ENCODE measurements at regions of chr1 and their contacts with region 1.

Region 1: DNA sequence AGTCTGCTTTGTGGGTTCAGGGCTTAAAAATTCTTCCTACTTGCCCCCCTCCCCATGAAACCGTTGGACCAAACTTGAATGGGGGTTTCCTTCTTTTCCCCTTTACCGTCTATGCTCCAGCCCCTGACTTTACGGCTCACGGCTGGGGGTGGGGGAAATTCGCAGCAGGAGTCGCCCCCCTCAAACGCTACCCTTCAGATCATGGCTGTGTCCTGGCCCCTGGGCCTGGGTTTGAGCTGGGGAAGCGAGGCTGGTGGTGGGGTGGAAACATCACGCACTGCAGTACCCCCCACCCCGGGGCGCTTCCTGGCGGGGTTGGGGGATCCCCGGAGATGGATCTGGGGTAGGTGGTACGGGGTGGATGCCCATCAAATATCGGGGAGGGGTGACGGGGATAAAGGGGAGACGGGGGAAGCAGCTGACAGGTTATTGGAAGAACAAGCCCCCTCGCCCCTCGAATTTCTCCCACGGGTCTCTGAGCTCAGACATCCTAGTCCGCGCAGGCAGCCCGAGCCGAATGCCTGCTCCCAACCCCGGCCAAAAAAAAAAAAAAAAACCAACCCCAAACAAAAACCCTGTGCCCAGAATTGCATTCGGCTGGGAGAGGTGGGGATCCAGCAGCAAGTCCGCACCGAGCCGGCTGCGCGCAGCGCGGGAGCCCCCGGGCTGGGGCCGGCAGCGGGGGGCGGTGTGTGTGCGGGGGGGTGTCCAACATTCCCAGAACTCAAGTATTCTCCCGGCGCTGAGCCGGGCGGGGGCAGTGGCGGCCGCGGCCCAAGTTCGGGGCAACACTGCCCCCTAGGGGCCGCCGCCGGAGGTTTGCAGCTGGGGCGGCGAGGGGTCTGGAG is 59.0 kb upstream of the ACOT11 start:
- DNase-seq: peak; percentile 83
- ATAC-seq: peak; percentile 68
- H3K4me3 ChIP-seq: peak overlapping the region; percentile 64 to 82 (median 74)
- H3K4me3 Mint-ChIP-seq: peak overlapping the region; percentile 85
- H3K27ac ChIP-seq: peak overlapping the region; percentile 18 to 76
- H3K27ac Mint-ChIP-seq: peak overlapping the region; percentile 78
- H3K4me1 ChIP-seq: peaks cover 17 to 37% of the 10 kb centered on the region in 2 donors
- H3K4me1 Mint-ChIP-seq: peaks cover 24% of the 10 kb centered on the region
- H3K27me3 ChIP-seq: peaks cover 0 to 11% (median 4%) of the 10 kb centered on the region in 4 experiments
- H3K27me3 Mint-ChIP-seq: peaks cover 12% of the 10 kb centered on the region
- CTCF ChIP-seq: peak; percentile 99

Region 2: DNA sequence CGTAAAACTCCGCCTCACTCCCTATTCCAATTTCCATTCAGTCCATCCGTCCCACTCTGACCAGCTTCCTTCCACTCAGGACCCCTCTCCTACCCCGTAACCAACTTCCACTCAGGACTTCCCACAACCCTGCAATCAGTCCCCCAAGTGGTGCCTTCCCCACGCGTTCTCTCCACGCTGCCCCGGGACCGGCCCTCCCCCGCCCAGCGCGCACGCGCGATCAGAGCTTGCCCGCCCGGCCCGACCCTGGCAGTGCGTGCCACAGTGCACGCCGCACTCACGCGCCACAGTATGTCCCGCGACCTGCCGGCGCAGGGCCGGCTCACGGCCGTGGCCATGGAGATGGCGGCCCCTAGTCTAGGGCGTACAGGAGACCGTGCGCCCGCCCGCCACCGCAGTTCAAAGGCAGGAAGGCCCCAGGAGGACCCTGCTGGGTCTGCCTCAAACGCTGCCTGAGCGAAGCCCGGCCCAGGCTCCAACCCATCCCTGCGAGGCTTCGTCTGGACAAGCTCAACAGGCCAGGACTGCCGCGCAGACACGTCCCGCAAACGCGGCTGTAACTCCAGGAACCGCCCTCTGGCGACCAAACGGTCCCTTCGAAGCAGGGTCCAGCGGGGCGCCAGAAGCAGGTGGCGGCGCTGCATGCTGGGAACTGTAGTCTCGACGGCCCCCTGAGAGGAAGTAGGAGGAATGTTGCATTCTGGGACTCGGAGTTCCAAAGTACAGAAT is 650.9 kb before region 1 on chr1 and contains the start of gene NDC1:
- CTCF ChIA-PET with region 1: no interaction called
- POLR2A ChIA-PET with region 1: no interaction called
- intact Hi-C with region 1: loop called (anchors 2 kb)
- DNase-seq: peak; percentile 96
- ATAC-seq: peak; percentile 90
- H3K4me3 ChIP-seq: peak within 1 kb of the TSS; percentile 66 to 95 (median 90)
- H3K4me3 Mint-ChIP-seq: peak within 1 kb of the TSS; percentile 100
- H3K27ac ChIP-seq: peak within 1 kb of the TSS; percentile 91 to 95
- H3K27ac Mint-ChIP-seq: peak within 1 kb of the TSS; percentile 99
- H3K4me1 ChIP-seq: peaks cover 11 to 14% of the 10 kb centered on the region in 2 donors
- H3K4me1 Mint-ChIP-seq: peaks cover 35% of the 10 kb centered on the region
- H3K27me3 ChIP-seq: no peaks in the 10 kb centered on the region
- H3K27me3 Mint-ChIP-seq: no peaks in the 10 kb centered on the region
- CTCF ChIP-seq: no peak
- total RNA-seq, gene NDC1: 12.0 and 15.7 TPM in 2 replicates

Region 3: DNA sequence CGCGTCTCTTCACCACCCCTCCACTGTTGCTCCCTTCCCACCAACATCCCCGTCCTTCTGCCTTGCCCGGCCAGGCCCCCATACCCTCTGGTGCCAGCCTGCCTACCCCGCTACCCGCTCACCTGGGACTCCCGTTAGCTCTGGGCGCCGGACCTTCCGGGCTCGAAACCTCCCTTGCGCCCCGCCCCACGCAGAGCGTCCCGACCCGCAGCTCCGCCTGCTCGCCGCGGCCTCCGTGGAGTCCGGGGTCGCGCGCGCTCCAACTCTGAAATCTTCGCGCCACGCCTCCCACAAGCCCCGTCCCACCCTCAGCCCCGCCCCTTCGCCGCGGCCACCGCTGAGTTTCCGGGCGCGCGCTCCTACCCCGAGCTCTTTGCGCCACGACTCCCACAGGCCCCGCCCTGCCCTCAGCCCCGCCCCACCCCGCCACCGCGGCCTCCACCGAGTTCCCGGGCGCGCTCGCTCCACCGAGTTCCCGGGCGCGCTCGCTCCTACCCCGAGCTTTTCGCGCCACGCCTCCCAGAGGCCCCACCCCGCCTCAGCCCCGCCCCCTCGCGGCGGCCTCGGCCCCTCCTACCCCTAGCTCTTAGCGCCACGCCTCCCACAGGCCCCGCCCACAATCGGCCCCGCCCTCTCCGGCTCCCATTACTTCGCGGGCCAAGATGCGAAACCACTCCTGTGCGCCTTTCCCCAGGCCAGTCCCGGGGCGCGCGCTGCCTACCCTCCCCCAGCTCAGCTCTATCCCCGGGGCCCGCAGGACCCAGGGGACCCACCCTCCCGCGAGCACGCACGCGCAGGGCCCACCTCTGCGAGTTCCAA is 543.4 kb before region 1 on chr1 and contains the start of gene IFT25:
- CTCF ChIA-PET with region 1: interaction called, 4 read pairs
- POLR2A ChIA-PET with region 1: no interaction called
- intact Hi-C with region 1: loop called (anchors 2 kb)
- DNase-seq: peak; percentile 98
- ATAC-seq: peak; percentile 79
- H3K4me3 ChIP-seq: peak within 1 kb of the TSS; percentile 65 to 95 (median 87)
- H3K4me3 Mint-ChIP-seq: peak within 1 kb of the TSS; percentile 99
- H3K27ac ChIP-seq: peak within 1 kb of the TSS; percentile 65 to 81
- H3K27ac Mint-ChIP-seq: peak within 1 kb of the TSS; percentile 96
- H3K4me1 ChIP-seq: peaks cover 16 to 20% of the 10 kb centered on the region in 2 donors
- H3K4me1 Mint-ChIP-seq: peaks cover 33% of the 10 kb centered on the region
- H3K27me3 ChIP-seq: no peaks in the 10 kb centered on the region
- H3K27me3 Mint-ChIP-seq: no peaks in the 10 kb centered on the region
- CTCF ChIP-seq: no peak
- total RNA-seq, gene IFT25: 45.7 and 48.1 TPM in 2 replicates

Region 4: DNA sequence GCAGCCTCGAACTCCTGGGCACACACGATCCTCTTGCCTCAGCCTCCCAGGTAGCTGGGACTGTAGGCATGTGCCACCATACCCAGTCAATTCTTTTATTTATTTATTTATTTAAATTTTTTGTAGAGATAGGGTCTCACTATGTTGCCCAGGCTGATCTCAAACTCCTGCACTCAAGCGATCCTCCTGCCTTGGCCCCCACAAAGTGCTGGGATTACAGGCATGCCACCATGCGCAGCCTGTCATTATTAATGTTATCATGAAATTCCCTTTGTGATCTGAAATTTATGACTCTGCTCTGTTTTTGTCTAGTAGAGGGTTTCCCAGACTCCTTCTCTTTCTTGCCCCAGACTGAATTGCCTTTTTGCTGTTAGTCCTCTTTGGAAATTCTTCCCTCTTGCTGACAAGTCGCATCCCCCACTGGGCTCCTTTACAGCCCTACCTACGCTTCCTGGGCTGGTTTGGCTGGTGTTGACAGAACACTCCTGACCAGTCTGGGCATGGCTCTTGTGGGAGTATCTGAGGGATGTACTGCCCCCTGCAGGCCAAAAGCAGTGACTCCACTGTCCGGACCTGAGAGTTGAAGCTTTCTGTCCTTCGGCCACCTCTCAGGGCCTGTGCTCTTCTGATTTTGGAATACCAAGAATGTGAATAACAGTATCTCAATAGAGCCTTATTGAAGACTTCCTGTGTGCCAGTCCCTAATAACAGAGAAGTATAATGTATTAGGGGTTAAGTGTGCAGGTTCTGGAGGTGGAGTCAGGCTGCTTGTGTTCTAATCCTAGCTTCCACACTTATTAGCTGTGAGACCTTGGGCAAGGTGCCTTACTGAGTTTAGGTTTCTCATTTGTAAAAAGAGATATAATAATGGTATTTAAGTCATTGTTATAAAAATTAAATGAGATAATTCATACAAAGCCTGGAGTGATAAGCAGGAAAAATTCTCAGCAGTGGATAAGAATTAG is 407.4 kb before region 1 on chr1:
- CTCF ChIA-PET with region 1: interaction called, 23 read pairs
- POLR2A ChIA-PET with region 1: no interaction called
- intact Hi-C with region 1: no loop called
- DNase-seq: peak; percentile 61
- ATAC-seq: peak; percentile 69
- H3K4me3 ChIP-seq: no peak overlapping the region
- H3K4me3 Mint-ChIP-seq: no peak overlapping the region
- H3K27ac ChIP-seq: no peak overlapping the region
- H3K27ac Mint-ChIP-seq: no peak overlapping the region
- H3K4me1 ChIP-seq: no peaks in the 10 kb centered on the region
- H3K4me1 Mint-ChIP-seq: peaks cover 4% of the 10 kb centered on the region
- H3K27me3 ChIP-seq: no peaks in the 10 kb centered on the region
- H3K27me3 Mint-ChIP-seq: no peaks in the 10 kb centered on the region
- CTCF ChIP-seq: peak; percentile 74

Region 5: DNA sequence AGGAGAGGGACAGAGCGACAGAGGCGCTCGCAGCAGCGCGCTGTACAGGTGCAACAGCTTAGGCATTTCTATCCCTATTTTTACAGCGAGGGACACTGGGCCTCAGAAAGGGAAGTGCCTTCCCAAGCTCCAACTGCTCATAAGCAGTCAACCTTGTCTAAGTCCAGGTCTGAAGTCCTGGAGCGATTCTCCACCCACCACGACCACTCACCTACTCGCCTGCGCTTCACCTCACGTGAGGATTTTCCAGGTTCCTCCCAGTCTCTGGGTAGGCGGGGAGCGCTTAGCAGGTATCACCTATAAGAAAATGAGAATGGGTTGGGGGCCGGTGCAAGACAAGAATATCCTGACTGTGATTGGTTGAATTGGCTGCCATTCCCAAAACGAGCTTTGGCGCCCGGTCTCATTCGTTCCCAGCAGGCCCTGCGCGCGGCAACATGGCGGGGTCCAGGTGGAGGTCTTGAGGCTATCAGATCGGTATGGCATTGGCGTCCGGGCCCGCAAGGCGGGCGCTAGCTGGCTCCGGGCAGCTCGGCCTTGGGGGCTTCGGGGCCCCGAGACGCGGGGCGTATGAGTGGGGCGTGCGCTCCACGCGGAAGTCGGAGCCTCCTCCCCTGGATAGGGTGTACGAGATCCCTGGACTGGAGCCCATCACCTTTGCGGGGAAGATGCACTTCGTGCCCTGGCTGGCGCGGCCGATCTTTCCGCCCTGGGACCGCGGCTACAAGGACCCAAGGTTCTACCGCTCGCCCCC is 289.1 kb before region 1 on chr1 and contains the starts of genes CYB5RL and MRPL37:
- CTCF ChIA-PET with region 1: interaction called, 10 read pairs
- POLR2A ChIA-PET with region 1: no interaction called
- intact Hi-C with region 1: loop called (anchors 1 kb)
- DNase-seq: peak; percentile 94
- ATAC-seq: peak; percentile 99
- H3K4me3 ChIP-seq: peak within 1 kb of the TSS; percentile 75 to 98 (median 88)
- H3K4me3 Mint-ChIP-seq: peak within 1 kb of the TSS; percentile 97
- H3K27ac ChIP-seq: peak within 1 kb of the TSS; percentile 60 to 77
- H3K27ac Mint-ChIP-seq: peak within 1 kb of the TSS; percentile 88
- H3K4me1 ChIP-seq: peaks cover 18 to 21% of the 10 kb centered on the region in 2 donors
- H3K4me1 Mint-ChIP-seq: peaks cover 34% of the 10 kb centered on the region
- H3K27me3 ChIP-seq: no peaks in the 10 kb centered on the region
- H3K27me3 Mint-ChIP-seq: no peaks in the 10 kb centered on the region
- CTCF ChIP-seq: no peak
- total RNA-seq, gene CYB5RL: 12.4 and 13.2 TPM in 2 replicates
- total RNA-seq, gene MRPL37: 37.0 and 39.9 TPM in 2 replicates

Region 6: GRCh38 chr1:54406339-54407153 is 82.5 kb before region 1 on chr1 and contains the start of gene SSBP3:
- CTCF ChIA-PET with region 1: interaction called, 81 read pairs
- POLR2A ChIA-PET with region 1: interaction called, 65 read pairs
- intact Hi-C with region 1: no loop called
- DNase-seq: peak; percentile 93
- ATAC-seq: peak; percentile 89
- H3K4me3 ChIP-seq: peak within 1 kb of the TSS; percentile 60 to 94 (median 85)
- H3K4me3 Mint-ChIP-seq: peak within 1 kb of the TSS; percentile 94
- H3K27ac ChIP-seq: peak within 1 kb of the TSS; percentile 53 to 70
- H3K27ac Mint-ChIP-seq: peak within 1 kb of the TSS; percentile 87
- H3K4me1 ChIP-seq: peaks cover 40 to 47% of the 10 kb centered on the region in 2 donors
- H3K4me1 Mint-ChIP-seq: peaks cover 46% of the 10 kb centered on the region
- H3K27me3 ChIP-seq: peaks cover 0 to 5% (median 0%) of the 10 kb centered on the region in 4 experiments
- H3K27me3 Mint-ChIP-seq: no peaks in the 10 kb centered on the region
- CTCF ChIP-seq: no peak
- total RNA-seq, gene SSBP3: 30.7 and 32.4 TPM in 2 replicates

Region 7: DNA sequence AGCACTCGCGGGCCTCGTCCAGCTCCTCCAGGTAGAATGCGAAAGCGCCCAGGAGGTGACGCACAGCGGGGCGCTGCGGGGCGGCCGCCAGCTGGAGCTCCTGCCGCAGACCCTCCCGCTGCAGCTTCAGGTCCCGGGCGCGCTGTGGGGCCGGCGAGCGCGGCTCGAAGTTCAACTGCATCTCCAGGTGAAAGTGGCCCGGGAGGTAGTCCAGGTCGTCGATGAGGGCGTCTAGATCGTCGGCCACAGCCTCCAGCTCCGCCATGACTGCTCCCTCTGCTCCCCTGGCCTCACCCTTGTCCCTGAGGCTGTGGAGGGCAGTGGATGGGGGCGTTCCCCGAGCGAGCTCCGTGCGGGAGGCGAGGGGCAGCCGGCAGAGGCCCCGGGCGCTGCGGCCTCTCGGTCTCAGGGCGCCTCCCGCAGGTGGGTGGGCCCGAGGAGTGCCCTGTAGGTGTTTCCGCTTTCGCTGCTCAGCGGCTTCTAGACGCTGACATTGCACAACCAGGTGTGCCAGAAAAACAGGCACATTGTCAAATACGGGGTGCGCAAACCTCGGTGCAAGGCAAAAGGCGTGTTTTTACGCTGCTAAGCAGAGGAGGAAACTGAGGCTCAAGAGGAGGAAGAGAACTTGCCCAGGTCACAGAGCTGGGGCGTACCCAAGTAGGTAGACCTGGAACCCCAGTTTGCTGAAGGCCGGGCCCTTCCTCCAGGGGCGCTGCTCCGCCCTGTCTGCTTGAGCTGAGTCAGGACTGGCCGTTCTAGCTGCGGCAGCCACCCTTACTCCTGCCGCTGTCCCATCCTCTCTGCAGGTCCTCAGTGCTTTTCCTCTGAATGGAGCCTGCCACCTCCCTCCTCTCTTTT is 312.1 kb after region 1 on chr1 and contains the start of gene TTC22:
- CTCF ChIA-PET with region 1: interaction called, 11 read pairs
- POLR2A ChIA-PET with region 1: no interaction called
- intact Hi-C with region 1: loop called (anchors 1 kb)
- DNase-seq: peak; percentile 81
- ATAC-seq: peak; percentile 92
- H3K4me3 ChIP-seq: peak within 1 kb of the TSS; percentile 50 to 82 (median 75)
- H3K4me3 Mint-ChIP-seq: peak within 1 kb of the TSS; percentile 99
- H3K27ac ChIP-seq: peak within 1 kb of the TSS in 1 of 2 donors; percentile 55
- H3K27ac Mint-ChIP-seq: peak within 1 kb of the TSS; percentile 93
- H3K4me1 ChIP-seq: peaks cover 25 to 31% of the 10 kb centered on the region in 2 donors
- H3K4me1 Mint-ChIP-seq: peaks cover 32% of the 10 kb centered on the region
- H3K27me3 ChIP-seq: no peaks in the 10 kb centered on the region
- H3K27me3 Mint-ChIP-seq: no peaks in the 10 kb centered on the region
- CTCF ChIP-seq: peak; percentile 81
- total RNA-seq, gene TTC22: 10.4 and 10.9 TPM in 2 replicates